HCT116 (cell line): ENCODE measurements at regions of chr14 and their contacts with region 1.

Region 1: GRCh38 chr14:36604757-36605505 is 22.5 kb upstream of the NKX2-8 start:
- DNase-seq: peak; percentile 76
- ATAC-seq: peak; percentile 94
- H3K4me3 ChIP-seq: no peak overlapping the region
- H3K27ac ChIP-seq: no peak overlapping the region
- H3K4me1 ChIP-seq: peaks cover 0 to 9% of the 10 kb centered on the region in 2 experiments; a peak in 2 of 4 replicates
- H3K27me3 ChIP-seq: no peaks in the 10 kb centered on the region
- CTCF ChIP-seq: peak; percentile 77 to 83 (median 80)
- POLR2A ChIP-seq: no peak
- RAD21 ChIP-seq: peak; percentile 82

Region 2: DNA sequence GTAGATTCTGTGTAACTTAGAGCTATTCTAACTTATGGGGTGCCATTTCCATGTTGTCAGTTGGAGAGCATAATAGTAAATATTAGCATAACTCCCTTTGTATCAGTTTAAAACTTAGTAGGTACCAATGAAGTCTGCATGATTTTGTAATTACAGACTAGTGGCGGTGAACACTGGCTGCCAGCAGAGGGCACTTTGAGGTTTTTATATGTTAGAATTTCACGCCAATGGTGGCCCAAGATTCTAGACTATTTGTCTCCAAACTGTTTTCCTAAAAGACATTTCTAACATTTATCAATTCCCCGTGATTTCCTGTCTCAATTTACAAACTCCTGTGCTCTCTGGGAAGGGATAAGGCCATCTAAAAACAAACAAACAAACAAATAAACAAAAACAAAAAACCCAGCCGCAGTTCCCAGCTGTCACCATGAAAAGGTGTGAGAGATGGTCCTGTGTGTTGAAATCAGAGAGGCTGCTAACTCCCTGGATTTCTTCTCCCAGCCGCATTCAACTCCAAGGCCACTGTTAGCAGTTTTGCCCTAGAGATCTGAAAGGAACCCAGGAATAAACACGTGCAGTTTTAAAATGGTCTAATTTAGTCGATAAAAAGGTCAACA is 721.1 kb before region 1 on chr14:
- CTCF ChIA-PET with region 1: interaction called, 11 read pairs
- POLR2A ChIA-PET with region 1: no interaction called
- RAD21 ChIA-PET with region 1: no interaction called
- intact Hi-C with region 1: loop called (anchors 2 kb)
- DNase-seq: no peak
- ATAC-seq: peak; percentile 70
- H3K4me3 ChIP-seq: no peak overlapping the region
- H3K27ac ChIP-seq: no peak overlapping the region
- H3K4me1 ChIP-seq: peaks cover 5 to 6% of the 10 kb centered on the region in 2 experiments
- H3K27me3 ChIP-seq: no peaks in the 10 kb centered on the region
- CTCF ChIP-seq: peak; percentile 46 to 84 (median 76); a peak in 5 of 6 replicates
- POLR2A ChIP-seq: no peak
- RAD21 ChIP-seq: peak; percentile 56

Region 3: GRCh38 chr14:36207500-36207899 is 397.4 kb before region 1 on chr14:
- CTCF ChIA-PET with region 1: no interaction called
- POLR2A ChIA-PET with region 1: no interaction called
- RAD21 ChIA-PET with region 1: no interaction called
- intact Hi-C with region 1: loop called (anchors 2 kb)
- DNase-seq: no peak
- ATAC-seq: peak; percentile 63
- H3K4me3 ChIP-seq: no peak overlapping the region
- H3K27ac ChIP-seq: no peak overlapping the region
- H3K4me1 ChIP-seq: no peaks in the 10 kb centered on the region
- H3K27me3 ChIP-seq: 0 out of 2 replicates have a peak, but pooled peaks cover 2% of the 10 kb centered on the region
- CTCF ChIP-seq: peak; percentile 36 to 57 (median 42); a peak in 4 of 6 replicates
- POLR2A ChIP-seq: no peak
- RAD21 ChIP-seq: peak; percentile 50

Region 4: GRCh38 chr14:36524874-36525745 is 79.8 kb before region 1 on chr14:
- CTCF ChIA-PET with region 1: interaction called, 10 read pairs
- POLR2A ChIA-PET with region 1: no interaction called
- RAD21 ChIA-PET with region 1: interaction called in 1 of 2 experiments, 3 read pairs
- intact Hi-C with region 1: loop called (anchors 1 kb)
- DNase-seq: peak; percentile 65
- ATAC-seq: peak; percentile 88
- H3K4me3 ChIP-seq: peak overlapping the region; percentile 39 to 56
- H3K27ac ChIP-seq: no peak overlapping the region
- H3K4me1 ChIP-seq: peaks cover 0 to 21% of the 10 kb centered on the region in 2 experiments; a peak in 2 of 4 replicates
- H3K27me3 ChIP-seq: peaks cover 4% of the 10 kb centered on the region; the same call in 1 of the 2 replicates
- CTCF ChIP-seq: peak; percentile 59 to 84 (median 79); a peak in 5 of 6 replicates
- POLR2A ChIP-seq: no peak
- RAD21 ChIP-seq: peak; percentile 56

Region 5: DNA sequence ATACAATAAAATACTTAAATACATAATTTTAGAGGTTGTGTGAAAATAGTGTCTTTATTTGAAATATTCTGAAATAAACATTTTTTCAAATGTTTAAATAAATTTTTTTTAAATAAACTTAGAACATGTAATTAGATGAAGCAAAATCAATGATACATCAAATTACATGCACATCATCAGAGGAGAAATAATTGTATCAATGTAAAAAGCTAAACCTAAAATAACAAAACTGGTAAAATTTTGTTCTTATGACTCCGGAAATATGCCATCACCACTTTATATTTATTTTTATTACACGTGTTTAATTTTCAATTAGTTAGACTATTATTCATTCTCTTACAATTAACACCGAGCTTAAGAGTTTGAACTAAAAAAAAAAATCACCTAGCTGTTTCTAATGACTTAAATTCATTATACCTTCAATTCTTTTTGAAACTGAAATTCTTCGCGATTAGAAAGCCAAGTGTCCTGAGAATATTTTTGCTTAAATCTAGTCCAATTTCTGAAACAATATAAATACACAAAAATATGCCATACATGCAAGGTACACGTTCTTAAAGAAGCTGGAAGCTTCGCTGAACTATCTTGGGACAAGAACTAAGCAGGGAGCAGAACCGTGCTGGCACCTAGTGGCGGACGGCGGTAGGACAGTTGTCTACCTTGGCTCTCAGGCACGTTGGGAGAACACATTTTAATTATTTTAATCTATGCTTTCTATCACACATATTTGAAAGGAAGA is 337.0 kb after region 1 on chr14:
- CTCF ChIA-PET with region 1: interaction called, 32 read pairs
- POLR2A ChIA-PET with region 1: no interaction called
- RAD21 ChIA-PET with region 1: interaction called in 1 of 2 experiments, 3 read pairs
- intact Hi-C with region 1: loop called (anchors 1 kb)
- DNase-seq: peak; percentile 60
- ATAC-seq: peak; percentile 93
- H3K4me3 ChIP-seq: no peak overlapping the region; a peak in 1 of 4 replicates
- H3K27ac ChIP-seq: no peak overlapping the region
- H3K4me1 ChIP-seq: peaks cover 0 to 4% of the 10 kb centered on the region in 2 experiments; a peak in 1 of 4 replicates
- H3K27me3 ChIP-seq: no peaks in the 10 kb centered on the region
- CTCF ChIP-seq: peak; percentile 84 to 97 (median 96)
- POLR2A ChIP-seq: no peak
- RAD21 ChIP-seq: peak; percentile 82